SK-N-SH (cell line): ENCODE measurements at regions of chr10 and their contacts with region 1.

Region 1: GRCh38 chr10:96491299-96491698 is 22.4 kb downstream of the TLL2 start:
- DNase-seq: peak; percentile 43
- H3K4me3 ChIP-seq: no peak overlapping the region
- H3K27ac ChIP-seq: no peak overlapping the region
- H3K4me1 ChIP-seq: no peaks in the 10 kb centered on the region
- H3K27me3 ChIP-seq: no peaks in the 10 kb centered on the region
- CTCF ChIP-seq: peak; percentile 46
- EP300 ChIP-seq: no peak
- RAD21 ChIP-seq: peak; percentile 61

Region 2: GRCh38 chr10:96448021-96448457 is 43.3 kb before region 1 on chr10:
- CTCF ChIA-PET with region 1: no interaction called
- POLR2A ChIA-PET with region 1: no interaction called
- DNase-seq: no peak
- H3K4me3 ChIP-seq: no peak overlapping the region
- H3K27ac ChIP-seq: no peak overlapping the region
- H3K4me1 ChIP-seq: no peaks in the 10 kb centered on the region; a peak in 1 of 4 replicates
- H3K27me3 ChIP-seq: no peaks in the 10 kb centered on the region
- CTCF ChIP-seq: no peak
- EP300 ChIP-seq: no peak
- RAD21 ChIP-seq: no peak

Region 3: GRCh38 chr10:96478317-96478716 is 13.0 kb before region 1 on chr10:
- CTCF ChIA-PET with region 1: interaction called, 15 read pairs
- POLR2A ChIA-PET with region 1: no interaction called
- DNase-seq: no peak
- H3K4me3 ChIP-seq: no peak overlapping the region
- H3K27ac ChIP-seq: no peak overlapping the region
- H3K4me1 ChIP-seq: no peaks in the 10 kb centered on the region
- H3K27me3 ChIP-seq: no peaks in the 10 kb centered on the region
- CTCF ChIP-seq: no peak
- EP300 ChIP-seq: no peak
- RAD21 ChIP-seq: no peak

Region 4: DNA sequence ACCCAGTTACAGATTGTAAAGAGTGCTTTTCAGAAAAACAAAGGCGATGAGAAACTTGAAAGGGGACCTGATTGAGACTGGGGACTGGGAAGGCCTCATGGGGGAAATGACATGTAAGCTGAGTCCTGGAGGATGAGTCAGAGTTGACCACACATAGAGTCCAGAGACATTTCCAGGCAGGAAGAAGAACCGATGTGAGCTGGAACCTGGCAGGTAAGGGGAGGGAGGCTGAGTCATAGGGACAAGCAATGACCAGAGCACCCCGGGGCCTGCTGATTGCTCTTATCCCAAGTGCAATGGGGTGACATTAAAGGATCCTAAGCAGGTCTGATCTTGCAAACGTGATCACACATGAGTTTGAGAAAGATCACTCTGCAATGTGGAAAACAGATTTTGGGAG is 10.7 kb after region 1 on chr10:
- CTCF ChIA-PET with region 1: interaction called, 14 read pairs
- POLR2A ChIA-PET with region 1: no interaction called
- DNase-seq: no peak
- H3K4me3 ChIP-seq: no peak overlapping the region
- H3K27ac ChIP-seq: no peak overlapping the region
- H3K4me1 ChIP-seq: peaks cover 0 to 4% of the 10 kb centered on the region in 2 experiments; a peak in 1 of 4 replicates
- H3K27me3 ChIP-seq: no peaks in the 10 kb centered on the region
- CTCF ChIP-seq: no peak
- EP300 ChIP-seq: no peak
- RAD21 ChIP-seq: no peak

Region 5: DNA sequence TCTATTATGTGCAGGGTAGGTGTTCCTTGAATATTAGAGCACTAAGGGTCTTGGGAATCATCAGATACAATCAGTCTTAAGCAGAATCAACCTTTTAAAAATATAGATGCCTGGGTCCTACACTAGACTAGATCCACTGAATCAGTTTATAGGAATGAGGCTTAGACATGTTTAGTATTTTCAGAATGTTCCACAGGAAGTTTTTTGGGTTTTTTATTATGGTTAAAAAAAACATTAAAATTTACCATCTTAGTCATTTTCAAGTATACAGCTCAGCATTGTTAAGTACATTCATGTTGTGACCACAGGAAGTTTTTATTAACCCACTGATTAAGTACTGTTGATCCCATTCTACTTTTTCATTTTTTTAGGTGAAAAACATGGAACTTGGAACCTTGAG is 476.5 kb after region 1 on chr10:
- CTCF ChIA-PET with region 1: no interaction called
- POLR2A ChIA-PET with region 1: no interaction called
- DNase-seq: no peak
- H3K4me3 ChIP-seq: no peak overlapping the region
- H3K27ac ChIP-seq: peak overlapping the region in 1 of 2 experiments; percentile 29; a peak in 2 of 4 replicates
- H3K4me1 ChIP-seq: peaks cover 0 to 8% of the 10 kb centered on the region in 2 experiments; a peak in 1 of 4 replicates
- H3K27me3 ChIP-seq: no peaks in the 10 kb centered on the region
- CTCF ChIP-seq: no peak
- EP300 ChIP-seq: no peak
- RAD21 ChIP-seq: no peak